ENCODE measurements at regions of chr2 and their contacts with region 1.

Region 1: DNA sequence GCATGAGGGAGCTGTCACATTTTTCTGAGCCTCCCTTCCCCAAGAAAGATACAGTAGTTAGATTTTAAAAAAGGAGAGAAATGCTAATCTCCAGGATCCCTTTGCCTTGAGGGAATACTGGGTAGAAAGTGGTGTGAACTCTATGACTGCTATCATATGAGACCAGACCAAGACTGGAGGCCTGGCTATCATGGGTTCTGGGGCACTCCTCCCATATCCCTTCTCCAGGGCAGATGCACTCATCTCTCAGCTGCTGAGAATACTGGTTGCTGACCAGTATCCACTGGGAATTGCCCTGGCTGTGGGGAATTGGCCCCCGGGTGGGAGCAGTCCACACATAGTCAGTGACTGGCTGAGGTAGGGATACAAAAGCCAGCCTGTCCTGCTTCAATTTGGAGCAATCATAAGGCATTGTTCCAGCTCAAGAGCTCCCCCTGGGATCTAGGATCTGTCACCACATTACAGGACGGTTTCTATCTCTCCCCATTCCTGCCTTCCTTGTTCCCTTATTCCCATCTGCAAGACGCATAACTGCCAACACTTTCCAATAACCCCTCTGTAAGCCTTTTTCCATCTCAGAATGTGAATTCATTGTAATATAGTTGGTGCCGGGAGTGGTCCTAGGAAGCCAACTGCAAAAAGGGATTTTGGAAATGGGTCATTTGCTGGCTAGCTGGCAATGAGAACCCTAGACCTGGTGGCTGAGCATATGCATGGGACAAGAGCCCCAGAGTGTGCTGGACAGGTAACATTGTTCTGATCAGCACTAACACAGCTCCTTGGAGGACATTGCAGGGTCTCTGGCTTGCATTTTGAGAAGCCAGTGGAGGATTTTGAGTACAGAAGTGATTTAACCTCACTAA is 35.4 kb upstream of the REEP1 start:
- DNase-seq: peak; percentile 68
- H3K4me3 ChIP-seq: no peak overlapping the region
- H3K27ac ChIP-seq: no peak overlapping the region
- H3K4me1 ChIP-seq: peaks cover 3% of the 10 kb centered on the region; the same call in 1 of the 2 replicates
- H3K27me3 ChIP-seq: peaks cover 14% of the 10 kb centered on the region; the same call in 1 of the 2 replicates

Region 2: DNA sequence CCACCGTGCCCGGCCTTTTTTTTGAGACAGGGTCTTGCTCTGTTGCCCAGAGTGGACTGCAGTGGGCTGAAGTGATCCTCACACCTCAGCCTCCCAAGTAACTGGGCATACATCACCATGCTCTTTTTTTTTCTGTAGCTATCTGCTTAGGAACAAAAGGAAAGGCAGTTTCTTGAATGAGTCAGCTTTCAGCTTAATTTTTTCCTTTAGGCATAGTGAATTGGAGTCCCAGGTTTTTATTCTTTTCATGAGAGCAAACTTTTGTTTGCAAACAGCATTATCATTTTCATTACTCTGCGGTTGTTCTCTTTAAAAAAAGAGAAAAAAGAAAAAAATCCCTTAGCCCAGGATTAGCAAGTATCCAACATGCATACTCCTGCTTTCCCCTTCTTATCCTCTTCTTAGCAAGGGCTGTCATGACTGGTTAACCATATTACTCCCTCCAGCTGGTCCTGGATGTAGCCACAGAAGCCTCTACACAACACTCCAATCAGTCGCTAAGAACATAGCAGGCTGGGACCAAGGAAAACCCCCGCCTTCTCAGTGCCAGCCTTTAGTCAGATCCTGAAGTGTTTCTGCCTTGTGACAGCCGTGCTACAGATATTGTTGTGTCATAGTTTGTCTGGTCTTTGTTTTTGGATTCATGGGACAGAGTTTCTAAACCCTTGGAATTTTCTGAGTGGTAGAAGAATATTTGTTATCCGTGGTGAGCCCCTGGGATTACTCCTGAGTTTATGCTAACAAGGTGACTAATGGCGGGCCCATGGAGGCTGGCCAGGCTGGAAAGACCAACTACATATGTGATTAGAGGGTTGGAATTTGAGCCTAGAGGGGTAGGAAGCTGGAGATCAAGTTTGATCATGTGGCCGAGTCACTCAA is 460.8 kb before region 1 on chr2:
- in situ Hi-C with region 1: no loop called
- DNase-seq: peak; percentile 88
- H3K4me3 ChIP-seq: peak overlapping the region; percentile 38
- H3K27ac ChIP-seq: peak overlapping the region; percentile 91
- H3K4me1 ChIP-seq: peaks cover 52% of the 10 kb centered on the region
- H3K27me3 ChIP-seq: no peaks in the 10 kb centered on the region

Region 3: GRCh38 chr2:86221066-86221684 is 151.7 kb before region 1 on chr2:
- in situ Hi-C with region 1: loop called (anchors 10 kb)
- DNase-seq: peak; percentile 63
- H3K4me3 ChIP-seq: no peak overlapping the region
- H3K27ac ChIP-seq: no peak overlapping the region
- H3K4me1 ChIP-seq: peaks cover 35% of the 10 kb centered on the region
- H3K27me3 ChIP-seq: no peaks in the 10 kb centered on the region

Region 4: DNA sequence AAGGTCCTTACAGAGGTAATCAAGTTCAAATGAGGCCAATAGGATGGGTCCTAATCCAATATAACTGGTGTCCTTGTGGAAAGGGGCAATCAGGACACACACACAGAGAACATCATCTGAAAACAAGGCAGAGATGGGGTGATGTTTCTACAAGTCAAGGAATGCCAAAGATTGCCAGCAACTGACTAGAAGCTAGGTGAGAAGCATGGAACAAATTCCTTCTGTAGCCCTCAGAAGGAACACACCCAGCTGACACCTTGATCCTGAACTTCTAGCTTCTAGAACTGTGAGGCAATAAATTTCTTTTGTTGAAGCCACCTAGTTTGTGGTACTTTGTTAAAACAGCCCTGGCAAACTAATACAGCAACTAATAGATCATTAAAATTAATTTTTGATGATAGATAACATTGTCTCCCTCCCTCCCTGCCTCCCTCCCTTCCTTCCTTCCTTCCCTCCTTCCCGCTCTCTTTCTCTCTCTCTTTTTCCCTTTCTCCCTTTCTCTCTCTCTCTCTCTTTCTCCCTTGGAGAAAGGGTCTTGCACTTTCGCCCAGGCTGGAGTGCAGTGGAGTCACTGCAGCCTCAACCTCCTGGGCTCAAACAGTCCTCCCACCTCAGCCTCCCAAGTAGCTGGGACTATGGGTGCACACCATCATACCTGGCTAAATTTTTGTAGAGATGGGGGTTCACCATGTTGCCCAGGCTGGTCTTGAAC is 428.1 kb after region 1 on chr2:
- in situ Hi-C with region 1: no loop called
- DNase-seq: no peak
- H3K4me3 ChIP-seq: no peak overlapping the region
- H3K27ac ChIP-seq: no peak overlapping the region
- H3K4me1 ChIP-seq: no peaks in the 10 kb centered on the region
- H3K27me3 ChIP-seq: peaks cover 13% of the 10 kb centered on the region

Measured in GM23248 (cell line).